ENCODE measurements at regions of chr4 and their contacts with region 1.

Region 1: GRCh38 chr4:124111922-124112321 is 600.6 kb downstream of the ANKRD50 start:
- DNase-seq: no peak
- H3K4me3 ChIP-seq: no peak overlapping the region
- H3K27ac ChIP-seq: peak overlapping the region; percentile 53
- H3K4me1 ChIP-seq: peaks cover 12% of the 10 kb centered on the region
- H3K27me3 ChIP-seq: no peaks in the 10 kb centered on the region
- CTCF ChIP-seq: peak; percentile 84

Region 2: GRCh38 chr4:123102897-123103471 is 1008.9 kb before region 1 on chr4:
- intact Hi-C with region 1: loop called (anchors 5 kb)
- DNase-seq: no peak
- H3K4me3 ChIP-seq: no peak overlapping the region
- H3K27ac ChIP-seq: no peak overlapping the region
- H3K4me1 ChIP-seq: peaks cover 17% of the 10 kb centered on the region
- H3K27me3 ChIP-seq: no peaks in the 10 kb centered on the region
- CTCF ChIP-seq: peak; percentile 87

Region 3: GRCh38 chr4:123127218-123127617 is 984.7 kb before region 1 on chr4:
- intact Hi-C with region 1: loop called (anchors 5 kb)
- DNase-seq: no peak
- H3K4me3 ChIP-seq: no peak overlapping the region
- H3K27ac ChIP-seq: peak overlapping the region; percentile 3
- H3K4me1 ChIP-seq: peaks cover 16% of the 10 kb centered on the region
- H3K27me3 ChIP-seq: no peaks in the 10 kb centered on the region
- CTCF ChIP-seq: peak; percentile 61

Region 4: DNA sequence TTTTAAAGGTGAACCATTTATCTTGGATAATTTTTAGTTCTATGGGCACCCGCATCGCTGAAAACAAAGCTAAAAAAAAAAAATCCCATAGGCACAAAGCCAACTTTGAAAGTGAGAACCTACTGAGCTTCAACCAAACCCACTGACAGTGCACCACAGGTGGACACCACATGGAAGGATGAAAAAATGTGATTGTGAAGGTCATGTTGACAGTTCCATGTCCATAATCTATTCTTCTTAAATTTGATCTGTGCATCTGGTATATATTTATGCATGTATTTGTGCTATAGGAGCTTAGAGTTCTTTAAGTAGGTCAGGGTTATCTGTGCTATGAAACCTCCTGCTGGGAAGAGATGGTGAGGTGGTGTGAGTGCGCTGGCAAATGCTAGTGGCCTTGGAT is 341.0 kb before region 1 on chr4:
- intact Hi-C with region 1: loop called (anchors 5 kb)
- DNase-seq: no peak
- H3K4me3 ChIP-seq: no peak overlapping the region
- H3K27ac ChIP-seq: no peak overlapping the region
- H3K4me1 ChIP-seq: no peaks in the 10 kb centered on the region
- H3K27me3 ChIP-seq: no peaks in the 10 kb centered on the region
- CTCF ChIP-seq: no peak

Region 5: GRCh38 chr4:124304941-124305340 is 193.0 kb after region 1 on chr4:
- intact Hi-C with region 1: no loop called
- DNase-seq: no peak
- H3K4me3 ChIP-seq: no peak overlapping the region
- H3K27ac ChIP-seq: peak overlapping the region; percentile 9
- H3K4me1 ChIP-seq: no peaks in the 10 kb centered on the region
- H3K27me3 ChIP-seq: no peaks in the 10 kb centered on the region
- CTCF ChIP-seq: no peak